AG04450 (cell line): ENCODE measurements at regions of chr20 and their contacts with region 1.

Region 1: DNA sequence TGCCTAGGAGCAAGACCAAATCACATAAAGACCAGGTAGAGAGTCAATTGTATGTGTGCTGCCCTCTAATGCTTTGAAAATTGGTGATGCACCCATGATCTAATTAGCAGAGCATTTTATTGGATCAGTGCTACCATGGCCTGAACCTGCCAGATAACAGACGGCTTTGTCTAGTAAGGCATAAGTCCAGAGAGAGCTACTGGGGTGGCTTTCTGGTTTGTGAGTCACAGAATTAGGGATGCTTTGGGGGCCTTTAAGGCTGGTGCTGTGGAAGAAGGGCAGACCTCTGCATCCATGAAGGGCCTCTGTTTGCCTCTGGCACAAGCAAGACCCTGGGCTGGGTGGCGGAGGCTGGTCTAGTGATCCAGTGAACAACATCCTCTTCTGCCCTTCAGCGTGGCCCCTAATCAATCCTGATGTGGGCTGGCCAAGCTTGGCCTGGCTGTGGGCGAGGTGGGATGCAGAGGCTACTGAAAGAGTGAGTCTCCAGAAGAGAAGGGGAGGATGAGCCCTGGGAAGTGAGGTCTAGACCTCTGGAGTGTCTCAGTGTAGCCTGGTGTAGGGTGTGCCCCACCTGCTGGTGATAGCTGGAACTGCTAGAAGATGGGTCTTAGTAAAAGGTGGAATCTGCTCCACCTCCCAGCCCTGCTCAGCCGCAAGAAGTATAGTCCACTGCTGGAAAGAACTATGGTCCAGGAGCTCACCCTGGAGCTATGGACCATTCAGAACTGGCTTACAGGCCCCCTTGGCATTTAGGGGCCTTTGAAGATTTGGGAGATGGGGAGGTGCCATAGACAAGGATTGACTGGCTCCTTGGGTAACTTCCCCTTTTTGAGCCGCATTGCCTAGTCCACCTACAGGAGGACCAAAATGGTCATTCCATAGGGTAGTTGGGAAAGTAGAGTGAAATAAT is 36.7 kb upstream of the AAR2 start:
- DNase-seq: peak; percentile 56
- H3K4me3 ChIP-seq: no peak overlapping the region
- H3K27ac ChIP-seq: no peak overlapping the region
- H3K27me3 ChIP-seq: no peaks in the 10 kb centered on the region
- CTCF ChIP-seq: peak; percentile 94

Region 2: GRCh38 chr20:36017034-36017951 is 182.3 kb before region 1 on chr20:
- CTCF ChIA-PET with region 1: interaction called, 10 read pairs
- POLR2A ChIA-PET with region 1: no interaction called
- DNase-seq: peak; percentile 27
- H3K4me3 ChIP-seq: no peak overlapping the region
- H3K27ac ChIP-seq: peak overlapping the region; percentile 57
- H3K27me3 ChIP-seq: no peaks in the 10 kb centered on the region
- CTCF ChIP-seq: no peak

Region 3: GRCh38 chr20:36153736-36154699 is 45.6 kb before region 1 on chr20:
- CTCF ChIA-PET with region 1: interaction called, 108 read pairs
- POLR2A ChIA-PET with region 1: no interaction called
- DNase-seq: no peak
- H3K4me3 ChIP-seq: peak overlapping the region; percentile 84
- H3K27ac ChIP-seq: no peak overlapping the region
- H3K27me3 ChIP-seq: peaks cover 3% of the 10 kb centered on the region
- CTCF ChIP-seq: no peak

Region 4: DNA sequence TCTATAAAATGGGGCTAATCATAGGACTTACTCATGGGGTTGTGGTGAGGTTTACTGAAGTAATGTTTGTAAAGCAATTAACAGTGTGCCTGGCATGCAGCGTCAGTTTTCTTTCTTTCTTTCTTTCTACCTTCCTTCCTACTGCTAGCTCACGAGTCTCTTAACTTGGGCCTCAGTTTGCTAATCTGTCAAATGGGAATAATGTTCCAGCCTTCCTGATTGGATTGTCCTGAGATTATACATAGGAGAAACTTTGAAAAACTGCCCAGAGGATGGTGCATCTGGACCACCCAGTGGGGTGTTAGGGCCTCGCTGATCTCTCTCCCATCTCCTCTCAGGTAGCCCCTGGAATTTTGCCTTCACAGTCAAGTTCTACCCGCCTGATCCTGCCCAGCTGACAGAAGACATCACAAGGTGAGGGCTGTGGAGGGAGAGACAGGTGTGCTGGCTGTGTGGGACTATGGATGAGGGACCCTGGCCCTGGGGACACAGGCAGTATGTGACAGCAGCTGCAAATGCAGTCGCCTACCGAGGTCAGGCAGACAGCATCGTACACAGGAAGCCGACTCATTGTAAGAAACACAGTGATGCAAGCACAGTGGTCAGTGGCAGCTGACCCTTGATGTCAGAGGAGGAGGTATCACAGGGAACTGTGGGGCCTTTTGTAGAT is 17.5 kb before region 1 on chr20:
- CTCF ChIA-PET with region 1: interaction called, 41 read pairs
- POLR2A ChIA-PET with region 1: no interaction called
- DNase-seq: peak; percentile 21
- H3K4me3 ChIP-seq: no peak overlapping the region
- H3K27ac ChIP-seq: no peak overlapping the region
- H3K27me3 ChIP-seq: no peaks in the 10 kb centered on the region
- CTCF ChIP-seq: no peak

Region 5: DNA sequence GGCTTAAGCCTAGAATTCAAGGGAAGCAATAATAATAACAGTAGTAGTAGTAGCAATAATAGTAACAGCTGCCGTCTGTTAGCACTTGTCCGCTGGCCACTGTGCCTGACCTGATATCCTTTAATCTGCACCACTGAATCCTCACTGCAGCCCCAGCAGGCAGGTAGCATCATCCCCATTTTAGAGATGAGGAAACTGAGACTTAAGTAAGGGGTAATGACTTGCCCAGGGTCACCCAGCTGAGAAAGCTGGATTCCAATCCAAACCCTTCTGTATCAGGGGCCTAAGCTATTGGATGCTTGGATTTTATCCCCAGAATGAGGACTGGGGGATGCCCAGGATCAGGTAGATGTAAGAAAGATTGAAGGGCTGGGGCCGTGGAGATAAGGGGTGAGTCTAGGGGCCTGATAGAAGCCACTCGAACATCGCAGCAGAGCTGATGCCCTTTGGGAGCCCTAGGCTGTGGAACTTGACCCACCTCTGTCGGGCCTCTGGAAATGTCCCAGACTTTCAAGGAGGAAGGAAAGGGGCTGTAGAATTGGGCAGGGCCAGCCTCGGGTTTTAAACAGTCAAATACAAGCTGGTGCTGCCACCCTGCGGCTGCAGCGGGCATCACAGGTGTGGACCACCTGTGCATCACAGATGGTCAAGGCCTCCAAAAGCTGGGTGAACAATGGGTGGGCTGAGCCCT is 239.6 kb after region 1 on chr20:
- CTCF ChIA-PET with region 1: interaction called, 60 read pairs
- POLR2A ChIA-PET with region 1: no interaction called
- DNase-seq: no peak
- H3K4me3 ChIP-seq: no peak overlapping the region
- H3K27ac ChIP-seq: no peak overlapping the region
- H3K27me3 ChIP-seq: peaks cover 37% of the 10 kb centered on the region
- CTCF ChIP-seq: peak; percentile 84